Mammary epithelial cell (primary cell): ENCODE measurements at regions of chr5 and their contacts with region 1.

Region 1: GRCh38 chr5:143244000-143244736 is 159.3 kb downstream of the NR3C1 start:
- DNase-seq: peak; percentile 95
- H3K4me3 ChIP-seq: peak overlapping the region; percentile 15 to 35 (median 31)
- H3K27ac ChIP-seq: peak overlapping the region; percentile 99
- H3K4me1 ChIP-seq: peaks cover 55% of the 10 kb centered on the region
- H3K27me3 ChIP-seq: no peaks in the 10 kb centered on the region
- CTCF ChIP-seq: no peak

Region 2: GRCh38 chr5:143262393-143263174 is 18.4 kb after region 1 on chr5:
- CTCF ChIA-PET with region 1: no interaction called
- dilution Hi-C with region 1: no loop called
- in situ Hi-C with region 1: no loop called
- intact Hi-C with region 1: loop called (anchors 1 kb)
- DNase-seq: peak; percentile 91
- H3K4me3 ChIP-seq: no peak overlapping the region
- H3K27ac ChIP-seq: peak overlapping the region; percentile 97
- H3K4me1 ChIP-seq: peaks cover 32% of the 10 kb centered on the region
- H3K27me3 ChIP-seq: no peaks in the 10 kb centered on the region
- CTCF ChIP-seq: no peak